Cardiac septum (tissue), 1 donor: ENCODE measurements at regions of chr20 and their contacts with region 1.

Region 1: DNA sequence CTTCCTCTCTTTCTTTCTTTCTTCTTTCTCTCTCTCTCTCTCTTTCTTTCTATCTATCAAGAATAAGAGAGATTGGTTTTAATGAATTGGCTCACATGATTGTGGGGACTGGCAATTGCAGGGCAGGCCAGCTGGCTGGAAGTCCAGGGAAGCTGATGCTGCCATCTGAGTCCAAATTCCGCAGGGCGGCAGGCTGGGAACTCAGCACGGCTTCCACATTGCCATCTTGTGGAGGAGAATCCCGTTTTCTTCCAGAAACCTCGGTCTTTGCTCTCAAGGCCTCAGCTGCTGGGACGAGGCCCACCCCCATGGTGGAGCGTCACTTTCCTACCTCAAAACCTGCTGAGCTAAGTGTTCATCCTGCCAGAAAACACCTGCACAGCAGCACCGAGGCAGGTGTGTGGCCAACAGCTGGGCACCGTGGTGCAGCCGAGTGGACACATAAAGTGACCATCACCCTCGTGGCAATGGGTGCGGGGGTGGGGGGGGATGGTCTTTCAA is 58.8 kb upstream of the SLCO4A1 start:
- DNase-seq: no peak

Region 2: DNA sequence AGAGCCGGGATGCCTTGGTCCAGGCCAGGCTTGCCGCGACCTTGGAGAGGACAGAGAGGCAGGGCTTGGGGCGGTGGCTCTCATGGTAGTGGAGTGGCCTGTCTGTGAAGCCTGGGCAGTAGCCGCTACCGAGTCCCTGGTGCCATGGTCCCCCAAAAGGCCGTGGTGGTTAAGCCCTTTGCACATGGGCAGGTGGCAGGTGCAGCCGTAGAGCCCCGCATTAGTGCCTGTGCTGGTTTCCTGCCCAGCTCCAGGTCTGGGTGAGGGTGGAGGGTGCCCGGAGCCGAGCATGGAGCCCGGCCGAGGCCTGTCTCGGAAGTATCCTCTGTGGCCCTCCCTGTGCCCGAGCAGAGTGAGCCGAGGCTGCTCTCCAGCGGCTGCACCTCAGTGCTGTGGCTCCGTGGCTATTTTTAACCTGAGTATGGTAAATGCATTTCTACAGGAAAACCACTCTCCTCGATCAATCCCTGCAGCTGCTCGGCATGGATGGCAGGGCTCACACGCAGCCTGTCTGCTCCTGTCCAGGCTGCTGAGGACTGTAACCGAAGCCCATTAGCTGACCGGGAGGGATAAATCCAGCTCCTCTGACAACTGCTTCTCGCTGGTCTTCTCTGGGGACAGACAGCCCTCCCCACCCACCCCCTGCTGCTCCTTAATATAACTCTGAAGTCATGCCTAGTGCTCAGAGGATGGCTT is 71.4 kb before region 1 on chr20:
- intact Hi-C with region 1: loop called (anchors 5 kb)
- DNase-seq: no peak